CD4-positive, alpha-beta memory T cell (primary cell): ENCODE measurements at regions of chr7 and their contacts with region 1.

Region 1: DNA sequence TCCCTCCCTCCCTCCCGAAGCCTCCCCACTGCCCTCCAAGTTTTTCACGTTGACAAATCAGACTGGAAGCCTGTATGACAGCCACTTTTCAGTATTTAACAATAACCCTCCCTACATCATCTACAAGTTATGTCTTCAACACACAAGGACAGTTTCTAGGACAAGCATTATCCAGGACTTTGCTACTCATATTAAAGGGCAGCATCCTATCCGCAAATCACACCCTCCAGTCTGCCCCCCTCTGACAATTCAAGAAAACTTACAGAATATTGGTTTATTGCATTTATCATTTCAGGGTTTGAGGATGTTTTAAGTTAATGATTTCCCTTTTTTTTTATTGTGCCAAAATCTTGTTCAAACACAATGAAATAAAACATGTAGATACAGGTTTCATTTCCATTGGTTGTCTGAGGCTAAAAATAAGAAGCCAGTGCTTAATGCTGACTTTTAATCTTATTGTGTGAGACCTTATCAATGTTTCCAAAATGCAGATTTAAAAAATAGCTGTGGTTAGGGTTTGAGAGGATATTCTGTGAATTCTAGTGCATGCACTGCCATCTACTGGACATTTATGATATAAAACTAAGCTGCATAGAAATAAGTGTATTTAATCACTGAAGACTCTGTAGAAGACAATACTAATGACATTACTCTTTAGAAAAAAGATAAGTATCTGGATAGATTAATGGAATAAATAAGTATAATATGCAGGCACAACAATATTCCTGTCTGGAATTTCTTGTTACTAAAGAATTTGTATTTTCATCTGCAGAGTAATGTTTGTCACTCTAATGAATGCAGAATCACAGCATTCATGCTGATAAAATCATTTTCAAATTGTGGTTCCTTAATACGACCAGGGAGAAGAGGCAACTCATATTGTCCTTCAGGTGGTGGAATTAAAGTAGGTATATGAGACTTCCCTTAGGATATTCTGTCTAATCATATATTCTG is 64.1 kb downstream of the CAV1 start:
- DNase-seq: peak in 4 of 5 donors; percentile 17 to 38 (median 32)
- H3K4me3 ChIP-seq: no peak overlapping the region
- H3K4me3 Mint-ChIP-seq: no peak overlapping the region
- H3K27ac ChIP-seq: no peak overlapping the region
- H3K27ac Mint-ChIP-seq: no peak overlapping the region
- H3K4me1 ChIP-seq: peaks cover 6% of the 10 kb centered on the region
- H3K4me1 Mint-ChIP-seq: peaks cover 10 to 22% (median 16%) of the 10 kb centered on the region in 4 donors
- H3K27me3 ChIP-seq: peaks cover 9% of the 10 kb centered on the region
- H3K27me3 Mint-ChIP-seq: peaks cover 17 to 22% of the 10 kb centered on the region in 2 donors

Region 2: DNA sequence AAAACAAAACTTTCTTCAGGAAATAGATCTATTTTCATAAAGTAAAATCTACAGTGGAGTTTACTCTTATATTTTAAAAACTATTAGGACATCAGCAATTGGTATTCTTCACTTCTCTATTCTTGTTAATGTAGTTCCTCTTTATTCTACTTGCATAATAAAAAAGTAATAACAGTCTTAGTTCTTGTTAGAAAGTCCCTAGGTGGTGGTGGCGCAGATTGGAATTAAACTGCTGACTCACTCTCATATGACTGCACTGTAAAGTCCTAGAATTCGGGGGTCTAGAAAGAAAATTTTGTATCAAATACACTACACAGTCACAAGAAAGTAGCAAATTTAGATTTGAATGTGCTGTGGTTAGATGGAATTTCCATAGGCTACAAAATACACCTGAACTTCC is 423.2 kb before region 1 on chr7:
- CTCF ChIA-PET with region 1: interaction called, 61 read pairs
- POLR2A ChIA-PET with region 1: no interaction called
- intact Hi-C with region 1: no loop called
- DNase-seq: no peak
- H3K4me3 ChIP-seq: no peak overlapping the region
- H3K4me3 Mint-ChIP-seq: no peak overlapping the region
- H3K27ac ChIP-seq: no peak overlapping the region
- H3K27ac Mint-ChIP-seq: no peak overlapping the region
- H3K4me1 ChIP-seq: peaks cover 6% of the 10 kb centered on the region
- H3K4me1 Mint-ChIP-seq: peaks cover 4 to 8% (median 5%) of the 10 kb centered on the region in 4 donors
- H3K27me3 ChIP-seq: no peaks in the 10 kb centered on the region
- H3K27me3 Mint-ChIP-seq: peaks cover 11 to 15% of the 10 kb centered on the region in 2 donors

Region 3: GRCh38 chr7:116258734-116259133 is 330.2 kb before region 1 on chr7:
- CTCF ChIA-PET with region 1: interaction called, 47 read pairs
- POLR2A ChIA-PET with region 1: no interaction called
- intact Hi-C with region 1: loop called (anchors 1 kb)
- DNase-seq: peak in 4 of 5 donors; percentile 31 to 51 (median 40)
- H3K4me3 ChIP-seq: no peak overlapping the region
- H3K4me3 Mint-ChIP-seq: no peak overlapping the region
- H3K27ac ChIP-seq: no peak overlapping the region
- H3K27ac Mint-ChIP-seq: peak overlapping the region in 5 of 7 donors; percentile 2 to 72 (median 58)
- H3K4me1 ChIP-seq: no peaks in the 10 kb centered on the region
- H3K4me1 Mint-ChIP-seq: peaks cover 2 to 11% (median 7%) of the 10 kb centered on the region in 4 donors
- H3K27me3 ChIP-seq: no peaks in the 10 kb centered on the region
- H3K27me3 Mint-ChIP-seq: no peaks in the 10 kb centered on the region

Region 4: DNA sequence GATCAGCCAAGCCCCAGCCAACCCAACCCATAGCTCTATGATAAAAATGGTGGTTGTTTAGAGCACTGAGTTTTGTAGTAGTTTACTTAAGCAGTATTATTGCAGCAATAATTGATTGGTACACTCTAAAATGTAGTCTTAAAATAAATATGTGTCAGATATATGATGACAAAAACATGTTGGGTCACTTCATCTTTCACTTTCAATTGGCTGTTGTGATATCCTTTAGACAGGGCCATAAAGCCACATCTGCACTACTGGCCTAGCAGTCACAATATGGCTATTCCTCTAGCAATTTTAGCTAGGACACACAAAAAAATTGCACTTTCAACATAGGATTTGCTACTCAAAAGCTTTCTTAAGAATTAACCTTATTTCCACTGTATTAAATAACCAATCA is 70.0 kb before region 1 on chr7:
- CTCF ChIA-PET with region 1: no interaction called
- POLR2A ChIA-PET with region 1: no interaction called
- intact Hi-C with region 1: no loop called
- DNase-seq: no peak
- H3K4me3 ChIP-seq: no peak overlapping the region
- H3K4me3 Mint-ChIP-seq: no peak overlapping the region
- H3K27ac ChIP-seq: no peak overlapping the region
- H3K27ac Mint-ChIP-seq: no peak overlapping the region
- H3K4me1 ChIP-seq: no peaks in the 10 kb centered on the region
- H3K4me1 Mint-ChIP-seq: peaks cover 0 to 4% (median 0%) of the 10 kb centered on the region in 4 donors
- H3K27me3 ChIP-seq: no peaks in the 10 kb centered on the region
- H3K27me3 Mint-ChIP-seq: peaks cover 28 to 38% of the 10 kb centered on the region in 2 donors

Region 5: DNA sequence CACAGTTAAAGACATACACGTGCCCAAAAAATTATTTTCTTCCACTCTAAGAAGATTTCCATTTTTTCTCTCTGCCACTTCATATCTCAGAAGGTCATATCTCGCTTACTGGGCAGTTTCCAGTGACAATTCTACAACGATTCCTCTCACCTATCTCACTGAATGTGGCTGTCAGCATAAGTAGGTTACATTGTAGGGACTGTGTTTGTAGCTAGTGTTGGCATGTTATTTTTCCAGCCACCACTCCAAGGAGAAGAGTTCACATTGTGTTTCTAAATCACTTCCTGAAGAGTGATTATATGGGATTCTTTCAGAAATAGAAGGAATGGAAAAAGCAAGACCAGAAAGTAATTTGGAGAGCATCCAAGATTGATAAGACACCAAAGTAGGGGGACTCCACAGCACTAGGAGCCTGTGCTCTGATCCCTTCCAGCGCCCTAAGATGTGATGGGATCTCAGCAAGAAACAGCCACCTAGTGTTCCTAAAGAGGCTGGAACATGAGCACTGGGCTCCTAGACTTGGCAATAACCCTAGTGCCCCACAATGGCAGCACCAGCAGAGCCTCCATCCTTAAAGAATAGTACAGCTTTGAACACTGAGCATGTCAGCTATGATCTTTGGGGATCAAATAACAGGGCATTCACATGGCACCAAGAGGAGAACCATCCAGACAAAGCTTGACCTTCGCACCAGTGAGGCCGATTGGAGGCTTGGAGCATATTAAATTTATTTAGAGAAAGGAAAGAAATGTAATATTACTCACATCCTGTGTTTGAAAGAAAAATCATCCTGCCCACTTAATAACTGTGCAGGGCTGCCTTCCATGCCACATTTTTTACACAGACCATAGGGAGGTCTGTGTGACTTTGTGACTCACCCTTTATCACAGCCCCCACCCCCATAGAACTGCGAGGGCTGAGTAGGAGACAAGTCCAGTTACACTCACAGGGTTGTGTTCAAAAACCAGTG is 12.3 kb before region 1 on chr7:
- CTCF ChIA-PET with region 1: interaction called, 28 read pairs
- POLR2A ChIA-PET with region 1: no interaction called
- intact Hi-C with region 1: no loop called
- DNase-seq: no peak
- H3K4me3 ChIP-seq: no peak overlapping the region
- H3K4me3 Mint-ChIP-seq: no peak overlapping the region
- H3K27ac ChIP-seq: no peak overlapping the region
- H3K27ac Mint-ChIP-seq: no peak overlapping the region
- H3K4me1 ChIP-seq: no peaks in the 10 kb centered on the region
- H3K4me1 Mint-ChIP-seq: no peaks in the 10 kb centered on the region
- H3K27me3 ChIP-seq: peaks cover 4% of the 10 kb centered on the region
- H3K27me3 Mint-ChIP-seq: peaks cover 3 to 7% of the 10 kb centered on the region in 2 donors

Region 6: GRCh38 chr7:116610210-116610609 is 21.3 kb after region 1 on chr7:
- CTCF ChIA-PET with region 1: interaction called, 13 read pairs
- POLR2A ChIA-PET with region 1: no interaction called
- intact Hi-C with region 1: no loop called
- DNase-seq: no peak
- H3K4me3 ChIP-seq: no peak overlapping the region
- H3K4me3 Mint-ChIP-seq: no peak overlapping the region
- H3K27ac ChIP-seq: no peak overlapping the region
- H3K27ac Mint-ChIP-seq: no peak overlapping the region
- H3K4me1 ChIP-seq: no peaks in the 10 kb centered on the region
- H3K4me1 Mint-ChIP-seq: no peaks in the 10 kb centered on the region
- H3K27me3 ChIP-seq: no peaks in the 10 kb centered on the region
- H3K27me3 Mint-ChIP-seq: peaks cover 18 to 28% of the 10 kb centered on the region in 2 donors